Activated T-helper 1 cell treated with anti-CD3 and anti-CD28 coated beads, Interleukin-12 subunit alpha, Interleukin-12 subunit beta, Interleukin-2, Interleukin-4 antibody, amounts not matched to agents 30 ng/mL and 10 ng/mL and 1 ng/mL, durations not matched to agents 14 hours and 24 hours and 36 hours (primary cell): ENCODE measurements at regions of chr14 and their contacts with region 1.

Region 1: GRCh38 chr14:63470962-63471793 is 72.0 kb downstream of the PPP2R5E start:
- DNase-seq: no peak
- H3K4me3 Mint-ChIP-seq: peak overlapping the region; percentile 46
- H3K27ac Mint-ChIP-seq: peak overlapping the region; percentile 40
- H3K4me1 Mint-ChIP-seq: peaks cover 46% of the 10 kb centered on the region
- H3K27me3 Mint-ChIP-seq: no peaks in the 10 kb centered on the region

Region 2: GRCh38 chr14:63437953-63438757 is 33.0 kb before region 1 on chr14:
- intact Hi-C with region 1: loop called (anchors 2 kb)
- DNase-seq: peak; percentile 30
- H3K4me3 Mint-ChIP-seq: peak overlapping the region; percentile 61
- H3K27ac Mint-ChIP-seq: peak overlapping the region; percentile 53
- H3K4me1 Mint-ChIP-seq: peaks cover 45% of the 10 kb centered on the region
- H3K27me3 Mint-ChIP-seq: no peaks in the 10 kb centered on the region

Region 3: GRCh38 chr14:63483315-63483714 is 12.1 kb after region 1 on chr14:
- intact Hi-C with region 1: loop called (anchors 1 kb)
- DNase-seq: no peak
- H3K4me3 Mint-ChIP-seq: no peak overlapping the region
- H3K27ac Mint-ChIP-seq: no peak overlapping the region
- H3K4me1 Mint-ChIP-seq: peaks cover 47% of the 10 kb centered on the region
- H3K27me3 Mint-ChIP-seq: no peaks in the 10 kb centered on the region